MCF 10A (cell line): ENCODE measurements at regions of chr4 and their contacts with region 1.

Region 1: DNA sequence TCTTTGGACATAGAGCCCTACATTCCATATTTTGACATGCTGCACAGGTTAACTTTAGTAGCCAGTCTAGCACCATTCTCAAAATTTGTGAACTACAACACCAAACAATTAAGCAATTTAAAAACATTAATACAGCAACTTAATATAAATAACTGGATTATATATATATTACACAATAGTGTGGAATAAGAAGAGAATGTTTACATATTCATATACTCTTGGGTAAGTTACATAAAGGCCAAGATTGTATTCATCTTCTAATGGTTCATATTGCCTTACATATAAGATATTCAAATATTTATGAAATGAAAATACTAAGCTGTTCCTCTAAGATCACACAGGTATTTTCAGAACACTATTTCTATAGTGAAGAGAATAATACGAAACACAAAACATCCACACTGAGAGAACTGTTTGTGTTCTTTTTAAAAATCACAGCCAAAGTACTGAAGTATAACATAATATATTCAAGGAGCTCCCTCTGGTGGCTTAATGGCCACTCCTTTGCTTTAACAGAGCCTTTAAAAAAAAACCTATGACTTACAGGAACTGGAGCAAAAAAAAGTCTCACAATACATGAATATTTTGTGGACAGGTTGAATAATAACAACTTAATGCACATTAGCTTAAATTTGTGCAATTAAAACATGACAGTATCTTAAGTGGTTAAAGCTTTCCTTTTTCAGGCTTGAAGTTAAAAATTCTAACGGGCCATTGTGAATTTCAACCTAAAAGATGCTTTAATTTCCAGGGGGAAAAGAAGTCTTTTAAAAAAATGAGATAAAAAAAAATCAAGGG is 46.2 kb downstream of the NEK1 start:
- DNase-seq: peak; percentile 58
- H3K4me3 Mint-ChIP-seq: no peak overlapping the region
- H3K27ac Mint-ChIP-seq: no peak overlapping the region
- H3K4me1 Mint-ChIP-seq: peaks cover 5% of the 10 kb centered on the region
- H3K27me3 Mint-ChIP-seq: no peaks in the 10 kb centered on the region
- CTCF ChIP-seq: peak; percentile 38

Region 2: GRCh38 chr4:169485791-169486742 is 80.2 kb before region 1 on chr4:
- CTCF ChIA-PET with region 1: interaction called, 7 read pairs
- POLR2A ChIA-PET with region 1: no interaction called
- intact Hi-C with region 1: loop called (anchors 5 kb)
- DNase-seq: peak; percentile 66
- H3K4me3 Mint-ChIP-seq: no peak overlapping the region
- H3K27ac Mint-ChIP-seq: peak overlapping the region; percentile 15
- H3K4me1 Mint-ChIP-seq: no peaks in the 10 kb centered on the region
- H3K27me3 Mint-ChIP-seq: no peaks in the 10 kb centered on the region
- CTCF ChIP-seq: peak; percentile 51

Region 3: DNA sequence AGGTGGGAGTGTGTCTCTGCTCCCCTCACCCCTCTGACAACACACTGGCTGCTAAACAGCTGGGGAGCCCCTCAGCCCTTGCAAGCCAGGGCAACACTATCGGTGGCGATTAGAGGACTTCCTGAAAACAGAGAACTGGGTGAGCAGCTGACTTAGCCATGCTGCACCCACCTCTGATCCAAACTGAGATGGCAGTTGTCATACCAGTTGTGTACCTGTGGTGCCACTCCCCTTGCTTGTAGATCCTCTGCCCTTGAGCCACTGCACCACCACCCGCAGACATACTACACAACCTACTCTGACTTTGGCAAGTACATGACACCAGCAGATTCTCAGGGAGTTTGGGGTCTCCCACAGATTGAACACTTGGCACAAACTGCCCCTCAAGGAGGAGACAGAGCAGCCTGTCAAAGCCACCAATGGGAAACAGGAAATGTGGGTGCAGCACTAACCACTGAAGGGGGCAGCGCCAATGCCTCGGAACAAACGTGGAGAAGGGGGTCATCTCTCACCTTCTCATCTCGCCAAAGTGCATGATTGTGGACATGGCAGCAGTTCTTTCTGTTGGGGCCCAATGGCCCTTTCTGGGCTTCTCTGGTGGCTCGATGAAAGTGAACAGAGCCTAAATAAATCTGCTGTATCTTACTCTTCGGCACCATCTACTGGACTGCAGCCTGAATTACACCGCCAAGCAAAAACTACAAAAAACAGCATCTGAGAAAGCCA is 73.6 kb before region 1 on chr4:
- CTCF ChIA-PET with region 1: interaction called, 10 read pairs
- POLR2A ChIA-PET with region 1: no interaction called
- intact Hi-C with region 1: loop called (anchors 5 kb)
- DNase-seq: peak; percentile 61
- H3K4me3 Mint-ChIP-seq: no peak overlapping the region
- H3K27ac Mint-ChIP-seq: no peak overlapping the region
- H3K4me1 Mint-ChIP-seq: no peaks in the 10 kb centered on the region
- H3K27me3 Mint-ChIP-seq: no peaks in the 10 kb centered on the region
- CTCF ChIP-seq: peak; percentile 77

Region 4: GRCh38 chr4:169582205-169582604 is 16.0 kb after region 1 on chr4:
- CTCF ChIA-PET with region 1: interaction called, 10 read pairs
- POLR2A ChIA-PET with region 1: no interaction called
- intact Hi-C with region 1: no loop called
- DNase-seq: no peak
- H3K4me3 Mint-ChIP-seq: no peak overlapping the region
- H3K27ac Mint-ChIP-seq: no peak overlapping the region
- H3K4me1 Mint-ChIP-seq: no peaks in the 10 kb centered on the region
- H3K27me3 Mint-ChIP-seq: no peaks in the 10 kb centered on the region
- CTCF ChIP-seq: no peak

Region 5: DNA sequence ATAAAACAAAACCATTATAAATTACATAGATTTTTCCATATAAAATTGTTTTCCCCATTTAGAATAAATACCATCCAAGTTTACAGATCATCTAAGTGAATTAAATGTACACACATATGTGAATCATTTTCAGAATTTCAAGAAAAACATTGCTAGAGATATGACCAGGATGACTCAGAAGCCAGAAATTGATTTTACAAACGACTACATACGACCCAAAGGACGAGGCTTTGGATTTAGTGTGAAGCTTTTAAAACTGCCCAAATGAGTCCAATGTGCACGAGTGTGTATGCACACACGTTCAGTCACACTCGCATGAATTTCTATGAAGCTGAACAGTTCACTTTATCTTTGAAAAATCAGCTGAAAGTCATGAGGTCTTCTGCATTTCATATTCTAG is 422.0 kb after region 1 on chr4:
- CTCF ChIA-PET with region 1: no interaction called
- POLR2A ChIA-PET with region 1: no interaction called
- intact Hi-C with region 1: no loop called
- DNase-seq: no peak
- H3K4me3 Mint-ChIP-seq: no peak overlapping the region
- H3K27ac Mint-ChIP-seq: no peak overlapping the region
- H3K4me1 Mint-ChIP-seq: peaks cover 4% of the 10 kb centered on the region
- H3K27me3 Mint-ChIP-seq: no peaks in the 10 kb centered on the region
- CTCF ChIP-seq: no peak